ENCODE measurements at regions of chr11 and their contacts with region 1.

Region 1: DNA sequence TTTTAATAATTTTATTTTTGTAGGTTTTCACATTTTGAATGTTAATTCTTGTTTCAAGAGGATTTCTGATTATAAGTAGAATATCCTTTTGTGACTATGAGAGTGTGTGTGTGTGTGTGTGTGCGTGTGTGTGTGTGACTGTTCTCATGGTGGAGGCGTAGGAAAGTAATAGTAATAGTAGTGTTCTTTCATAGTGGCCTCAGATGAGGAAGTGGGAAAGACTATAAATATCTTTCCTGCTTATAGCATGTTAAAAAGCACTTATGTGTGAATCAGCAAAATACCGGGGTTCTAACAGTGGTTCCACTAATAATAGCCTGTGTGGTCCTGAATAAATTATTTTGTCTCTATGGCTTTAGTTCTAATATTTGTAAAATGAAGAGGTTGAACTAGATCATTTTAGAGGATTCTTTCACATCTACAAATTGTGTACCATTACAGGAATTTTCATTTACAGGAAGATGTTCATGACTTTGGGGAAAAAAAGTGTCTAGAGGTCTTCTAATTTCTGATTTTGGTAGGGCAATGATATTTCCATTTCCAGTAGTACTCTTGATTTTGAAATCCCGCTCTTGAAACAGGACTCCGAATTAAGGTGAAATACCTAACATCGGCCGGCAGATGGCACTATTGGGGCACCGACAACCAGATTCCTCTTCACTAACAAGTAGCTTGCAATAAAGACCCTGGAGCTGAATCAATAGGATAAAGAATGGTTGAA is 29.9 kb upstream of the OR10G7 start:
- DNase-seq: peak; percentile 74 to 80
- H3K4me3 ChIP-seq: no peak overlapping the region
- H3K4me3 Mint-ChIP-seq: no peak overlapping the region
- H3K27ac Mint-ChIP-seq: no peak overlapping the region
- H3K4me1 ChIP-seq: no peaks in the 10 kb centered on the region
- H3K4me1 Mint-ChIP-seq: no peaks in the 10 kb centered on the region
- H3K27me3 ChIP-seq: peaks cover 2% of the 10 kb centered on the region
- H3K27me3 Mint-ChIP-seq: peaks cover 27% of the 10 kb centered on the region
- CTCF ChIP-seq: peak; percentile 84 to 96

Region 2: GRCh38 chr11:123624974-123625373 is 446.1 kb before region 1 on chr11:
- CTCF ChIA-PET with region 1: no interaction called
- POLR2A ChIA-PET with region 1: no interaction called
- intact Hi-C with region 1: no loop called
- DNase-seq: no peak
- H3K4me3 ChIP-seq: no peak overlapping the region
- H3K4me3 Mint-ChIP-seq: no peak overlapping the region
- H3K27ac Mint-ChIP-seq: no peak overlapping the region
- H3K4me1 ChIP-seq: no peaks in the 10 kb centered on the region
- H3K4me1 Mint-ChIP-seq: no peaks in the 10 kb centered on the region
- H3K27me3 ChIP-seq: no peaks in the 10 kb centered on the region
- H3K27me3 Mint-ChIP-seq: peaks cover 19% of the 10 kb centered on the region
- CTCF ChIP-seq: no peak

Region 3: GRCh38 chr11:124114942-124115781 is 44.1 kb after region 1 on chr11 and contains the start of gene VWA5A:
- CTCF ChIA-PET with region 1: interaction called, 3 read pairs
- POLR2A ChIA-PET with region 1: no interaction called
- intact Hi-C with region 1: loop called (anchors 2 kb)
- DNase-seq: peak; percentile 77 to 81
- H3K4me3 ChIP-seq: no peak within 1 kb of the TSS
- H3K4me3 Mint-ChIP-seq: peak within 1 kb of the TSS; percentile 54
- H3K27ac Mint-ChIP-seq: no peak within 1 kb of the TSS
- H3K4me1 ChIP-seq: peaks cover 5% of the 10 kb centered on the region; the same call in 1 of the 2 replicates
- H3K4me1 Mint-ChIP-seq: peaks cover 7% of the 10 kb centered on the region
- H3K27me3 ChIP-seq: no peaks in the 10 kb centered on the region
- H3K27me3 Mint-ChIP-seq: peaks cover 14% of the 10 kb centered on the region
- CTCF ChIP-seq: no peak
- total RNA-seq, gene VWA5A: 1.3 and 1.6 TPM in 2 replicates

Region 4: GRCh38 chr11:124277804-124278203 is 206.7 kb after region 1 on chr11:
- CTCF ChIA-PET with region 1: interaction called, 18 read pairs
- POLR2A ChIA-PET with region 1: no interaction called
- intact Hi-C with region 1: loop called (anchors 1 kb)
- DNase-seq: no peak
- H3K4me3 ChIP-seq: no peak overlapping the region
- H3K4me3 Mint-ChIP-seq: no peak overlapping the region
- H3K27ac Mint-ChIP-seq: no peak overlapping the region
- H3K4me1 ChIP-seq: peaks cover 17% of the 10 kb centered on the region
- H3K4me1 Mint-ChIP-seq: peaks cover 13% of the 10 kb centered on the region
- H3K27me3 ChIP-seq: no peaks in the 10 kb centered on the region
- H3K27me3 Mint-ChIP-seq: no peaks in the 10 kb centered on the region
- CTCF ChIP-seq: peak; percentile 46 to 54

Region 5: GRCh38 chr11:124402326-124402922 is 331.3 kb after region 1 on chr11:
- CTCF ChIA-PET with region 1: no interaction called
- POLR2A ChIA-PET with region 1: no interaction called
- intact Hi-C with region 1: loop called (anchors 10 kb)
- DNase-seq: peak; percentile 84 to 90
- H3K4me3 ChIP-seq: no peak overlapping the region
- H3K4me3 Mint-ChIP-seq: no peak overlapping the region
- H3K27ac Mint-ChIP-seq: peak overlapping the region; percentile 30
- H3K4me1 ChIP-seq: no peaks in the 10 kb centered on the region
- H3K4me1 Mint-ChIP-seq: peaks cover 6% of the 10 kb centered on the region
- H3K27me3 ChIP-seq: no peaks in the 10 kb centered on the region
- H3K27me3 Mint-ChIP-seq: peaks cover 4% of the 10 kb centered on the region
- CTCF ChIP-seq: peak; percentile 88 to 92

Measured in Caco-2 (cell line).